ENCODE measurements at regions of chr5 and their contacts with region 1.

Region 1: DNA sequence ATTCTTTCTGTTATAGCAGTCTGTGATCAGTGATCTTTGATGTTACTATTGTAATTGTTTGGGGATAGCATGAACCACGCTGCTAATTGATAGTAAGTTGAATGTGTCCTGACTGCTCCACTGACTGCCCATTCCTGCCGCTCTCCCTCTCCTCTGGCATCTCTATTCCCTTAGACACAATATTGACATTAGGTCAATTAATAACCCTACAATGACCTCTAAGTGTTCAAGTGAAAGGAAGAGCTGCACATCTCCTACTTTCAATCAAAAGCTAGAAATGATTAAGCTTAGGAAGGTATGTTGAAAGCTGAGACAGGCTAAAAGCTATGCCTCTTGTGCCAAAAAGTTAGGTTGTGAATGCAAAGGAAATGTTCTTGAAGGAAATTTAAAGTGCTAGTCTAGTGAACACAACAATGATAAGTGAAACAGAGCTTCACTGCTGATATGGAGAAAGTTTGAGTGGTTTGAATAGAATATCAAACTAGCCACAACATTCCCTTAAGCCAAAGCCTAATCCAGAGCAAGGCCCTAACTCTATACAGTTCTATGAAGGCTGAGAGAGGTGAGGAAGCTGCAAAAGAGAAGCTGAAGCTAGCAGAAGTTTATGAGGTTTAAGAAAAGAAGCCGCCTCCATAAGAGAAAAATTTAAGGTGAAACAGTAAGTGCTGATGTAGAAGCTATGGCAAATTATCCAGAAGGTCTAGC is 12.9 kb downstream of the CLINT1 start:
- DNase-seq: no peak
- H3K4me3 ChIP-seq: no peak overlapping the region
- H3K27me3 ChIP-seq: no peaks in the 10 kb centered on the region
- CTCF ChIP-seq: no peak

Region 2: DNA sequence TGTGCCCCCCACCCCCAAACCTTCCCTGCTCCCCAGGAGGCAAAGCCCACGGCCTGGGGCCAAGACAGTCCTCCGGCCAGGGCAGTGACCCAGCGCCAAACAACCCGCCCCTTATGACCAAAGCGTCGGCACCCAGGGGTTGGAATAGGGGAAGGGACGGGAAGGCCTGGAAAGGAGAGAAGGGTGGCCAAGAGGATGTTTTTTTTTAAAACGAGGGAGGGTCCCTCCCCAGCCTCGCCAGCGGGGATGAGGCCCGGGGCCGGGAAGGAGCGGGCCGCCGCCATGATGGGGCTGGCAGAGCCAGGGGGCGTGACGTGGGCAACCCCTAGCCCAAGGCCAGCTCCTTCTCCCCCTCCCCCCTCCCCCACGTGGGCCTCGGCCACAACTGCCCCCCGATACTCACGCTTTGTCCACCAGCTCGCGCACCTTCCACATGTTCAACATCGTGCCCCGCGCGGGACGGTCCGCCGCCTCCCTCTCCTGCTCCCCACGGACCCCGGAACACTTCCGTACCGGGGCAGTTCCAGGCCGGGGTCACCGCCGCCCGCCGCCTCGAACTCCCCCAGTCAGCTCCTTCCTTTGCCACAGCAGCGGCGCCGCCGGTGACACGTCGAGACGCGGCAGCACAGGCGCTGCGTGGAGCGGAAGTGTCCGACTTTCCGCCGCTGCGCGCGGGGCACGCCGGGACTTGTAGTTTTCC is 12.6 kb after region 1 on chr5 and contains the start of gene CLINT1:
- CTCF ChIA-PET with region 1: interaction called, 10 read pairs
- POLR2A ChIA-PET with region 1: no interaction called
- DNase-seq: no peak
- H3K4me3 ChIP-seq: peak within 1 kb of the TSS; percentile 86
- H3K27me3 ChIP-seq: no peaks in the 10 kb centered on the region
- CTCF ChIP-seq: no peak
- polyA plus RNA-seq, gene CLINT1: 93.2 and 164 TPM in 2 replicates

Region 3: GRCh38 chr5:158084292-158084691 is 238.2 kb after region 1 on chr5:
- CTCF ChIA-PET with region 1: no interaction called
- POLR2A ChIA-PET with region 1: no interaction called
- DNase-seq: no peak
- H3K4me3 ChIP-seq: no peak overlapping the region
- H3K27me3 ChIP-seq: no peaks in the 10 kb centered on the region
- CTCF ChIP-seq: no peak